Activated T-helper 1 cell treated with anti-CD3 and anti-CD28 coated beads, Interleukin-12 subunit alpha, Interleukin-12 subunit beta, Interleukin-2, Interleukin-4 antibody, amounts not matched to agents 30 ng/mL and 10 ng/mL and 1 ng/mL, durations not matched to agents 14 hours and 24 hours and 36 hours (primary cell): ENCODE measurements at regions of chr12 and their contacts with region 1.

Region 1: DNA sequence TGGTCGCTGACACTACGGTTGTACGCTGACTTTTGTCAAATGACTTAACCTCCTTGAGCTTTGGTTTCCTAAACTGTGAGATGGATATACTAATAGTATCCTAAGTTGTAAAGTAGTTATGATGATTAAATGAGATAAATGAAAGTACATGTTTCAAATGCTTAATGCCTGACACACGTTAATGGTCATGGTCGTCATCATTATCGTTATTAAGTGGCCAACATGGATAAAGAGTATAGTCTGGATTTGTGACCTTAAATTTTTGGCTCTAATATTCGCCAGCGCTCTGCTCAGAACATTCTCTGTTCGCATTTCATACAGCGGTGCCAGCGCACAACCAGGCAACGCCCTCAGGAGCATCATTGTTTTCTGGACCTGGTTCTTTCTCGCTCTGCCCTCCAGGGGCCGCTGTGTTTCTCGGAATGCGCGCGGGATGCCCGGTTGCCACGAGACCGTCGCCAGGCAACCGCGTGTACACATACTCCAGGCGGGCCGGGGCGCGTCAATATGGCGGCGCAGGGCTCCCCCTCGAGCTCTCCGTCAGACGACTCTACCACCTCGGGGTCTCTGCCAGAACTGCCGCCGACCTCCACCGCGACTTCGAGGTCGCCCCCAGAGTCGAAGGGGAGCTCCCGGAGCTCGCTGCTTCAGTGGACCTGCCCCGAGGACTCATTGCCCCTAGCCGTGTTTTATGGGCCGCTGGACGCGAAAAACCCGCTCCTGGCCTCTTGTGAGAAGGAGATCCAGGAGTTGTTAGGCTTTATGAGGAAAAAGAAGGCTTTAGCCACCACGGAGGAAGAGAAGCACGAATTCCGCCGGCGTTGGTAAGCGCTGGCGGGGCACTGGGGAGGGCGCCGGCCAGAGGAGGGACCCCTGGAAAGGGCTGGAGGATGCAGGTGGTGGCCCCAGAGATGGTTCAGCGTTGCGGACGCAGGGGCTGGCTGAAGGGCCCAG is at the start of gene CFAP54:
- DNase-seq: peak; percentile 92
- H3K4me3 Mint-ChIP-seq: peak within 1 kb of the TSS; percentile 86
- H3K27ac Mint-ChIP-seq: peak within 1 kb of the TSS; percentile 85
- H3K4me1 Mint-ChIP-seq: peaks cover 43% of the 10 kb centered on the region
- H3K27me3 Mint-ChIP-seq: peaks cover 25% of the 10 kb centered on the region
- total RNA-seq, gene CFAP54: 0.17 and 0.34 TPM in 2 replicates

Region 2: GRCh38 chr12:96035278-96036236 is 453.8 kb before region 1 on chr12 and contains the start of gene LTA4H:
- intact Hi-C with region 1: loop called (anchors 1 kb)
- DNase-seq: peak; percentile 93
- H3K4me3 Mint-ChIP-seq: no peak within 1 kb of the TSS
- H3K27ac Mint-ChIP-seq: no peak within 1 kb of the TSS
- H3K4me1 Mint-ChIP-seq: peaks cover 10% of the 10 kb centered on the region
- H3K27me3 Mint-ChIP-seq: no peaks in the 10 kb centered on the region
- total RNA-seq, gene LTA4H: 57.3 and 59.6 TPM in 2 replicates

Region 3: DNA sequence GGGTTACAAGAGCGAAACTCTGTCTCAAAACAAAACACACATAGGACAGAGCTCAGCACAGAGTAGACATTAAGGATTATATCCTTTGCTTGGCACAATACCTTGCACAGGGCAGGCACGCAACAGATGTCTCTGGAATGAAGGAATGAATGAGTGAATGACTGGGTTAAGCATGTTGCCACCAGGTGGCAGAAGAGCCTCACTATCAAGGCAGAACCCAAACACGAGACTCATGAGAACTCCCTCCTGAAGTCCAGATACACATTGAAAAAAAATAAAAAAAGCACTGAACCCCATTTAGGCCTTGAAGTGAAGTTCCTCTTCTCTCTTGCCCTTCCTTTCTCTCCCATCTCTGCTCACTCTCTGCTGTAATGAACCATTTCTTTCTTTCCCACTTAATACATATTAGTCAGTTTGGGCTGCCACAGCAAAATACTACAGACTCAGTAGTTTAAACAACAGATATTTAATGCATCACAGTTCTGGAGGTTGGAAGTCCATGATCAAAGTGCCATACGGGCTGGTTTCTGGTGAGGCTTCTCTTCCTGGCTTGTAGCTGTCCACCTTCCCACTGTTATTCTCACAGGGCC is 427.4 kb before region 1 on chr12:
- intact Hi-C with region 1: loop called (anchors 1 kb)
- DNase-seq: peak; percentile 58
- H3K4me3 Mint-ChIP-seq: no peak overlapping the region
- H3K27ac Mint-ChIP-seq: no peak overlapping the region
- H3K4me1 Mint-ChIP-seq: peaks cover 27% of the 10 kb centered on the region
- H3K27me3 Mint-ChIP-seq: no peaks in the 10 kb centered on the region

Region 4: DNA sequence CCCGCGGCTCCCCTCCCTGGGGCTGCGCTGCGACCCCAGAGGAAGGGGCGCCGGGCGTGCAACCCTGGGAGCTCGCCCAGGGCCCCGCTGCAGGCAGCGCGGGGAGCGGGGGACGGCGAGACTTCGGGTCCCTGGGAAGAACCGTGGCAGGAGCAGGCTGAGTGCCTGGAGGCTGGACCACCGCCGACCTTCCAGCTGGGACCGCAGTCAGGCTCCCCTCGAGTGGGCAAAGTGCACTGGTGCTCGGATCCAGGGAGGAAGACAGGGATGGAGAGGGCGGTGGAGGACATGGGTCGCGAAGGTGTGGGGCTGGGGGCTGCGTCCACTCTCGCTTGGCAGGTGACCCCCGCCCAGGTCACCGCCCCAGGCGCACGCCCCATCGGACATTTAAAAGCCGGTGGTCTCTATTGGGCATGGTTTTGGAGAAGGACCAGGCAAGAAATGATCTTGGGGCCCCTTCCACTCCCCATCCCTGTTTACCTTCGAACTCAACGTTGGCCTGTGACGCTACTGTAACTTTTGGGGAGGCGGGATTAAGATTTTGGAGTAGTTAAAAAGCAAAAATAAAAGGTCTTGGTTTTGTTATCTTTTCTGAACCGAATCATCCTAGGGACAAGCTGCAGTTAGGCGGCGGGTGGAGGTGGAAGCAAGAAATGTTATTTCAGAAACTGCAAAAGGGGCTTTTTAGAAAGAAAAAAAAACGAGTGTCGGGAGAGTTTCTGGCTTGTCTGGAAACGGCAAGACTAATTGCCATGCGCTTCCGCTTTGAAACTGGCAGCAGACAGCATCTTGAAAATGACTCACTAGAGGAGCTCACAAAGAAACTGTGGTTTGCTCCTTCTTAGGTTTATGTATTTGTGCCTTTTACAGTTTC is 294.2 kb before region 1 on chr12:
- intact Hi-C with region 1: loop called (anchors 2 kb)
- DNase-seq: peak; percentile 68
- H3K4me3 Mint-ChIP-seq: peak overlapping the region; percentile 96
- H3K27ac Mint-ChIP-seq: peak overlapping the region; percentile 98
- H3K4me1 Mint-ChIP-seq: peaks cover 49% of the 10 kb centered on the region
- H3K27me3 Mint-ChIP-seq: no peaks in the 10 kb centered on the region

Region 5: DNA sequence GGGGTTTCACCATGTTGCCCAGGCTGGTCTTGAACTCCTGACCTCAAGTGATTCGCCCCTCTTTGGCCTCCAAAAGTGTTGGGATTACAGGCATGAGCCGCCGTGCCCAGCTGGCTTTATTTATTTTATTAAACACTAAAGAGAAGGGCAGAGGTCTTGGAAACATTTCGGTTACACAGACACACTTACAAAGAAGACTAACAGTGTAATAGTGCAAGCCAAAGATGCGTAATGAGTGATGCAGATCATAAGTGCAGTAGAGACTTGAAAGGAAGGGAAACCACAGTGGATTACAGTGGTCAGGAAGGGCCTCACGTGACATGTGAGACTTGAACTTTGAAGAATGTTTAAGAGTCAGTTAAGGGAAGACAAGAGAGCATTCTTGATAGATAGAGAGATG is 55.3 kb before region 1 on chr12:
- intact Hi-C with region 1: loop called (anchors 1 kb)
- DNase-seq: peak; percentile 75
- H3K4me3 Mint-ChIP-seq: peak overlapping the region; percentile 9
- H3K27ac Mint-ChIP-seq: peak overlapping the region; percentile 32
- H3K4me1 Mint-ChIP-seq: peaks cover 32% of the 10 kb centered on the region
- H3K27me3 Mint-ChIP-seq: peaks cover 6% of the 10 kb centered on the region

Region 6: GRCh38 chr12:96501139-96501761 is 11.9 kb after region 1 on chr12:
- intact Hi-C with region 1: loop called (anchors 1 kb)
- DNase-seq: peak; percentile 33
- H3K4me3 Mint-ChIP-seq: peak overlapping the region; percentile 61
- H3K27ac Mint-ChIP-seq: peak overlapping the region; percentile 83
- H3K4me1 Mint-ChIP-seq: peaks cover 59% of the 10 kb centered on the region
- H3K27me3 Mint-ChIP-seq: peaks cover 4% of the 10 kb centered on the region